GM13976 (cell line): ENCODE measurements at regions of chr11 and their contacts with region 1.

Region 1: DNA sequence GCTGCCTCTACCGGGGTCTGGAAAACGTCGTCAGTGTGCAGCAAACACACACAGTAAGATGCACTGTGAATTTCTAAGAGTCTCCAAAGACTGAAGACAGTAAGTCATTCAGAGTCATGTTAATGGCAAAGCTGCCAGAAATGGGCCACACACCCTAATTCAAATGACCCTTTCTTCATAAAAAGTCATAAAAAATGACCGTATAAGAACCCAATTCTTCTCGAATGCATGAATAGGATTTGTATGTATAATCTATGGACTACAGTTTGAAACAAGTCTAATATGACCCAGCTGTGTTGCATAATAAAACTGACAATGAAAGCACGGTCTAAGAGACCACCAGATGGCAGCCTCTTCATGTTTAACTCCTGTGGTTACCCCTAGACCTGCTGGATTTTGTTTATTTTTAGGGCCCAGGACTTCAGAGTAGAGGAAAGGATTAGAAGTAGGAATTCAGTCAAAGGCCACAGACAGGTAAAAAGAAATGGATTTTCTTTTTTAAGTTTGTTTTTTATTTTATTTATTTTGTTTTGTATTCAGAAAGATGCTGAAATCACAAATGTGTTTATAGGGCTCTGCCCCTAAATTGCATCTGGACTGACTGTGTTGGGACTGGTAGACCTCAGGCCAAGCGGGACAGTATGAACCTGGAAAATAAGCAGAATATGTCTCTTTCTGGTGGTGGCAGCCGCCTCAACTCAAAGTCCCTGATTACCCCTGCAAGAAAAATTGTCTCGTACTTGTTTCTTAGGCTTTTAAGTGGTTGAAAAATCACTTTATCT is 32.1 kb upstream of the SLC5A12 start:
- DNase-seq: no peak
- CTCF ChIP-seq: peak; percentile 48

Region 2: DNA sequence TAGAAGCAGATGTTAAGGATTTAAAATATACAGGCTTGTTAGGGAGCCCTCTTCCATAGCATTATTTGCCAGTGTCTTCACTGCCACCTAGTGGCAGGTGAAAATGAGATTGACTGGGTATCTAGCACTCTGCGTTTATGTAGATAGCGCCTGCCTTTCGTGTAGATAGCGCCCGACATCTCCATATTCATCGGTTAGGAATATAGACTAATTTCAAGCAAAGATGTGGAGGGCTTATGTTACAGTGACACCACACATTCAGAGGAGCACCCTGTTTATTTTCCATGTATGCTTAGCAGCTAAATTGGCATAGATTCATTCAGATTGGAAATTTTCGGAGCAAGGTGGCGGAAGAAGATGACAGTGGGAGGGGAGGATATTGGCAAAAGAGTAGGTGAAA is 104.0 kb before region 1 on chr11:
- in situ Hi-C with region 1: no loop called
- DNase-seq: peak; percentile 32
- CTCF ChIP-seq: peak; percentile 46

Region 3: DNA sequence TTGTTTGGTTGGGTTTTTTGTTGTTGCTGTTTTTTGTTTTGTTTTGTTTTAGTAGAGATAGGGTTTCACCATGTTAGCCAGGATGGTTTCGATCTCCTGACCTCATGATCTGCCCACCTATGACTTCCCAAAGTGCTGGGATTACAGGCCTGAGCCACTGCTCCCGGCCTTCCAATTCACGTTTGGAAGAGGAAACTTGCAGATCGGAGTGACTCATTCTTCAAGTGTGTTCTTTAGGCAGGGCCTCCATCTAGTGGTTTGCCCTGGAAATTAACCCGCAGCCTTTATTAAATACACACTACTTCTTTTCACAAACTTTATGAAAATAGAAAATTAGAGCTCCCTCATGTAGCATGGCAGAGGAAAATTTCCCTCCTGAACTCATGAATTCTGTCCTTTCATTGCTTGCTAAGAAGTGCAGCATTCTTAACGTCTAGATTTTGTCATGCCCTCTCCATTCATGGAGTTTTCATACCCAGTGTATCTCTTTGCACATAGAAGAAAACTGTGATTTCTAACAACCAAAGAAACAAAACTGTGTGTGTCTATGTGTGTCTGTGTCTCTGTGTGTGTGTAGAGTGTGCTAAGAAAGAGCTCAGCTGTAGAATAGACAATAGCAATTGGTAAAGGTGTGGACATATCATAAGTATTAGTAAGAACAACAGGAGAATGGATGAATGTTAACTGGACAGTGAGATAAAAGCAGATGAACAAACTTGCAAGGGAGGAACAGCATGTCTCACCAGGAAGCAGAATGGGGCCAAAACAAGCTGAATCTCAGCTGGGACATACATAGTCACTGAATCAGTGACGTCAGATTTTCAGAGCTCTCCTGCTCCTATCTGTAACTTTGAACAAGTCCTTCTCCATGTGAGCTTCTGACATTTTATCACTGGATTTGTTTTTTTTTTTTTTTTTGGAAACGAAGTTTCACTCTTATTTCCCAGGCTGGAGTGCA is 405.1 kb after region 1 on chr11:
- in situ Hi-C with region 1: loop called (anchors 25 kb)
- DNase-seq: peak; percentile 44
- CTCF ChIP-seq: peak; percentile 40

Region 4: GRCh38 chr11:27201454-27202236 is 447.7 kb after region 1 on chr11:
- in situ Hi-C with region 1: no loop called
- DNase-seq: no peak
- CTCF ChIP-seq: no peak

Region 5: DNA sequence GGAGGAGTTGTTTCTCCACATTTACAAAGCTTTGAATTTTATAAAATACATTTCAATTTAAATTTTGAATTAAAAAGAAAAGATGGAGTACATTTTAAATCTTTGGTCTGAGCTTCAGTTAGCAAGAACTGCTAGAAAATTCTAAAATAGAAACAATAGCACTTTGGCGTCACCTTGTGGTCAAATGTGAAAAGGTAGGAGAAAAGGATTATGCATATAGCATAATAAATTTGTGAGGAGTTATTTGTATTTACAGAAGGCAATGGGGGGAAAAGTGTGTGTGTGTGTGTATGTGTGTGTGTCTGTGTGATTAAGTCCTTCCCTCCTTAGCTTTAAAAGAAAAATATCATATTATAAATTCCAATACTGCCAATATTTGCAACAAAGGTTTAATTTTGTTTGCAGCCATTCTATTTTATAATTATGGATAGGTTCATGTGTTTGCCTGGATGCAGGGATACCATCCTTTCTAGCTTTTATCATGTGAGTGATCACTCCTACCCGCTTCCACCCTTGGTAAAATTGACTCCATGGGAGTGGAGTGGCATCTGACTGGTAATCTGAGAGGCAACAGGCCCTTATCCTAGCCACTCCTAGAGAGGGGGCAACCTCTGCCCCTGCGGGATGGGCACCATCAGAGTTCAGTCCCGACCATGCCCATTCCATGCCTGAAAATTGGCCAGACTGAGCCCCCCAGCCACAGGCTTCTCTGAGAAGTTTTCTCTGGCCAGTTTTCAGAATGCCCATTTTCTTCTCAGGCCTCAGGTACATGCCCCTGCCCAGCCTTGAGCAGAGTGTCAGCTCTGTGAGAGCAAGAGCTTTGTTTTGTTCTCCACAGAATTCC is 732.2 kb after region 1 on chr11:
- in situ Hi-C with region 1: loop called (anchors 25 kb)
- DNase-seq: peak; percentile 51
- CTCF ChIP-seq: peak; percentile 74